Left cardiac atrium (tissue), 4 donors: ENCODE measurements at regions of chr6 and their contacts with region 1.

Region 1: DNA sequence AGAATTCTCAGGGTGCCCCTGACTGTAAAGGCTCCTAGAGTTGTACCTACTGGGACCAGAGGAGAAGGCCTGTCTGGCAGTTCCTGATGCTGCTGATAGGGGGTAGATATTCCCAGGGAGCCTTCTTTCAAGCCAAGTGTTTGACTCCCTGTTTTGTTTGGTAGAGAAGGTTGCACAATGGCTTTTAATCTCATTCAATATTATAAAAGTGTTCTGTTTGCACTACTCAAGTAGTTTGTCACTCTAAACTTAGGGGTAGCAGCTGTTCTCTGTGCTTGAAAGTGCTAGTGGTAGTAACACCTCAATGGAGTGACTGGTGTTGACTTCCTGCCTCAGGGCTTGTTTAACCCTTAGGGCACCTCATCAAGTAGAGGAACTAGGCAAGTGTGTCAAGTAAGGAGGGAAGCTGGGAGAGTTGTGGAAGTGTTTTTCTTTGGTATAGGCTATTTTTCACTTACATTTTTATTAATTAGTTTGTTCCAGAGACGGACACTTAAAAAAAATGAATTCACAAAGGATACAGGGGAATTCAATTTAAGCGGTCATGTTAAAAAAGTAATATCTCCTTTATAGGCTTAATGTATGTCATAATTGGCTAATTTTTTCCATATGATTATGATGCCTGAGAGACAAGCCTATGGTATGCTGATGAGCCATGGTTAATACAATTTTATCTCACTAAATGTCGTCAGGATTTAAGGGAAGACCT is 38.1 kb downstream of the BICRAL start:
- DNase-seq: no peak
- ATAC-seq: peak; percentile 43 to 55

Region 2: GRCh38 chr6:42782622-42783176 is 37.3 kb before region 1 on chr6:
- intact Hi-C with region 1: loop called in 1 of 2 experiments (anchors 5 kb)
- DNase-seq: peak; percentile 84
- ATAC-seq: peak; percentile 72 to 85